ENCODE measurements at regions of chr14 and their contacts with region 1.

Region 1: GRCh38 chr14:100975671-100976070 is 72.1 kb upstream of the RTL1 start:
- DNase-seq: no peak
- H3K4me3 ChIP-seq: no peak overlapping the region
- H3K27ac ChIP-seq: no peak overlapping the region
- H3K4me1 ChIP-seq: peaks cover 4% of the 10 kb centered on the region
- H3K27me3 ChIP-seq: no peaks in the 10 kb centered on the region
- CTCF ChIP-seq: no peak
- POLR2A ChIP-seq: no peak

Region 2: DNA sequence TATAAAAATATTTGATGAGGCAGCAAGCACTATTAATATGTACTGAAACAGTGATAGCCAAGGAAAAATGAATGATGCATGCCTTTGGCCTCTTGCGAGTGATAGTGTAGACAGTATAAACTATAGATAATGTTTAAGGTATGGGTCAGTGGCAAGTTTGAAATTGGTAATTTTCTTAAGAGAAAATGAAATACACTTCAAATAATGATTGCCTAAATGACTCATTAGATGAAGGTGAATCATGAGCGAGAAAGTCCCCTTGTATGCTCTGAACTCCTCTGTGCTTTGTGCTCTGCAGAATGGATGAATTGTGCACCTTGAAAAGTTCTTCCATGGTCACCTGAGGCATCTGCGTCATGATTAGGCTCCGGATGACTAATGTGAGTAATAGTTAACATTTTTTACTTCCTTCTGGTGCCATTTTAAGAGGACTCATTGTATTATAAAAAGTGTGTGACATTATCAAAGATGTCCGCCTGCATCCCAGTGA is 12.8 kb after region 1 on chr14:
- CTCF ChIA-PET with region 1: no interaction called
- POLR2A ChIA-PET with region 1: no interaction called
- dilution Hi-C with region 1: no loop called
- intact Hi-C with region 1: loop called (anchors 2 kb)
- DNase-seq: peak; percentile 22
- H3K4me3 ChIP-seq: no peak overlapping the region
- H3K27ac ChIP-seq: peak overlapping the region; percentile 22
- H3K4me1 ChIP-seq: peaks cover 4% of the 10 kb centered on the region
- H3K27me3 ChIP-seq: no peaks in the 10 kb centered on the region
- CTCF ChIP-seq: no peak
- POLR2A ChIP-seq: no peak